Ovary (tissue), 10 donors: ENCODE measurements at regions of chr4 and their contacts with region 1.

Region 1: DNA sequence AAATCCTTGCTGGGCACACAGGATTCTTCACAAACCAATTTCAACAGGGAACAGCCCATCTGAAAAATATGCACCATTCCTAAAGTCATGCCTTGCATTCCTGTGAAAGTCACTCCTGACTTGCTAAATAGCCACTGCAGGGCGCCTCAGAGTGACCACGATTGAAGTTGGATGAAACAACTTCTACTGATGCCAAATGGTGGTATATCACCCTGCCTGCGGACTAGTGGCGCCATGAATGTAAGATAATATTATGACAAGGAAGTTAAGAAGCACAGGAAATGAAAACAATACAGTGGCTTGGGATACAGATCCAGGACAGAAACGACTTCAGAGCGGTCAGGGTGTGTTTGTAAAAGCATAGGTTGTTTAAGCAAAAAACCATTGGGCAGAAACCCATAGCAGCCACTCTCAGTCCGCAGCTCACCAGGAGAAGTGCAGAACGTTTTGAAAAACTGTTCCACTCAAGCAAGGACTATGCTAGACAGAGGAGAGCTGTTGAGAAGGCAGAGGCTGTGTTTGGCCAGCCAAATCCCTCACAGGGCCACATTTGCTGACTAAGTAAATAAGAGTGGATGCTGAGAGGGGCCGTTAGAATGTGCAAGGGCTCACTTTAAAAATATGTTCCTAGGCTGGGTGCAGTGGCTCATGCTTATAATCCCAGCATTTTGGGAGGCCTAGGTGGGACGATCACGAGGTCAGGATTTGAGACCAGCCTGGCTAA is 250.4 kb downstream of the PTTG2 start:
- DNase-seq: no peak
- H3K4me3 ChIP-seq: no peak overlapping the region
- H3K27ac ChIP-seq: no peak overlapping the region
- H3K4me1 ChIP-seq: no peaks in the 10 kb centered on the region
- H3K27me3 ChIP-seq: no peaks in the 10 kb centered on the region
- CTCF ChIP-seq: no peak
- EP300 ChIP-seq: no peak
- POLR2A ChIP-seq: no peak

Region 2: DNA sequence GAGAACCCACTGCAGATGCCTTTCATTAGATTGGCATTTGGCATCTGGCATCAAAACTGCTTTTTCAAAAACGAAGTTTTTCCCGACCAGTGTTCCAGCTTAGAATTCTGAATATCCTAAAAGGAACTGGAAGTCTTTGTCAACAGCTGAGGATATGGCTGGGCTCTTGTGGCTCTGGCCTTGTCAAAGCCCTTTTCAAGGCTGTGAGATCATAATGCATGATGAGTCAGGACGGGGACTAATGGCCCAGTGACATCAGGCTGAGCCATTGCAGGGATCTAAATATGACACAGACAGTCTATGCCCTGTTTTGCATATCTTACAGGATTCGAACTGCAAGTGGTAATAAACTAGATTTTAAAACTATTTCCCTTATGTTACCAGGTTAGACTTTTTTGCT is 56.1 kb after region 1 on chr4:
- intact Hi-C with region 1: loop called in 1 of 4 experiments (anchors 10 kb)
- DNase-seq: no peak
- H3K4me3 ChIP-seq: no peak overlapping the region
- H3K27ac ChIP-seq: no peak overlapping the region
- H3K4me1 ChIP-seq: no peaks in the 10 kb centered on the region
- H3K27me3 ChIP-seq: no peaks in the 10 kb centered on the region
- CTCF ChIP-seq: no peak
- EP300 ChIP-seq: no peak
- POLR2A ChIP-seq: no peak